A673 (cell line): ENCODE measurements at regions of chr6 and their contacts with region 1.

Region 1: GRCh38 chr6:80872199-80872950 is 765.9 kb downstream of the BCKDHB start:
- DNase-seq: peak; percentile 88
- H3K4me3 ChIP-seq: no peak overlapping the region
- H3K27ac ChIP-seq: peak overlapping the region; percentile 95
- H3K4me1 ChIP-seq: peaks cover 17% of the 10 kb centered on the region
- H3K27me3 ChIP-seq: no peaks in the 10 kb centered on the region
- CTCF ChIP-seq: no peak

Region 2: GRCh38 chr6:80991316-80991715 is 118.9 kb after region 1 on chr6:
- CTCF ChIA-PET with region 1: no interaction called
- POLR2A ChIA-PET with region 1: no interaction called
- intact Hi-C with region 1: loop called (anchors 5 kb)
- DNase-seq: peak; percentile 93
- H3K4me3 ChIP-seq: no peak overlapping the region
- H3K27ac ChIP-seq: peak overlapping the region; percentile 47
- H3K4me1 ChIP-seq: peaks cover 28% of the 10 kb centered on the region
- H3K27me3 ChIP-seq: no peaks in the 10 kb centered on the region
- CTCF ChIP-seq: no peak

Region 3: DNA sequence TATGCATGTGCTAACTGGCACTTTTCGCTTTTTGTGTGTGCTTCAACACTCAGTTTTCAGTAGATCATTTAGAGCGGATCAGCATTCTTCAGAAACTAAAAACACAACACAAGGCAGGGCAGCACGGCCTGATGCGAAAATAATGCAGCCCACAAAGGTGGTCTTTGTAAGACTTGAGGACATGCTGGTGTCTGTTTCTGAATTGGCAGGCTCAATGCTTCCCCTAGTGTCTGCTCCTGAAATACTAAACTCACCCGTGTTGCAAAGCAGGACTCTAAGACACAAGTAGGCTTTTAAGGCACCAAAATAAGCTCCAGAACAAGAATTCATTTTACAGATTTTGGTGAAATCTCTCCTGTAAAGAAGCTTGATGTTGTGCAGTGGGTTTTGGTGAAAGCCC is 203.6 kb after region 1 on chr6:
- CTCF ChIA-PET with region 1: no interaction called
- POLR2A ChIA-PET with region 1: interaction called, 10 read pairs
- intact Hi-C with region 1: no loop called
- DNase-seq: peak; percentile 57
- H3K4me3 ChIP-seq: no peak overlapping the region
- H3K27ac ChIP-seq: no peak overlapping the region
- H3K4me1 ChIP-seq: no peaks in the 10 kb centered on the region
- H3K27me3 ChIP-seq: peaks cover 8% of the 10 kb centered on the region
- CTCF ChIP-seq: peak; percentile 79

Region 4: GRCh38 chr6:81241126-81242041 is 369.0 kb after region 1 on chr6:
- CTCF ChIA-PET with region 1: no interaction called
- POLR2A ChIA-PET with region 1: no interaction called
- intact Hi-C with region 1: no loop called
- DNase-seq: peak; percentile 73
- H3K4me3 ChIP-seq: no peak overlapping the region
- H3K27ac ChIP-seq: no peak overlapping the region
- H3K4me1 ChIP-seq: no peaks in the 10 kb centered on the region
- H3K27me3 ChIP-seq: no peaks in the 10 kb centered on the region
- CTCF ChIP-seq: peak; percentile 67

Region 5: DNA sequence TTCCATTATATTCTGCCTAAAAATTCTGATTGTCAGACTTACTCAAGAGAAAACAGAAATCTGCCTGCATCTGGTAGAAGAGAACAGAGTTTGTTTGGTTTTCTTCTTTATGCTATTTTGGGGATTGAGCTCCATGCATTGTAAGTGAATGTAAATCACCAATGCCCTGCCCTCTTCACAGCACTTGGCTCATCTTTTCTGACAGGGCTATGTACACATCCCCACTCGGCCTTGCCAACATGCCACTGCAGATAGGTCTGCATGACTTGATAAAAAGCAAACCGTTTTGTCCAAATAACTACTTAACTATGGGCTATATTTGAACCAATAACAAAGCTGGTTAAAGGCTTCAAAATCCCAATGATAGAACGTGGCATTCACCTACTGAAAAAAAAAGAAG is 1257.4 kb after region 1 on chr6:
- CTCF ChIA-PET with region 1: no interaction called
- POLR2A ChIA-PET with region 1: no interaction called
- intact Hi-C with region 1: no loop called
- DNase-seq: no peak
- H3K4me3 ChIP-seq: no peak overlapping the region
- H3K27ac ChIP-seq: no peak overlapping the region
- H3K4me1 ChIP-seq: peaks cover 7% of the 10 kb centered on the region
- H3K27me3 ChIP-seq: no peaks in the 10 kb centered on the region
- CTCF ChIP-seq: no peak